Mammary epithelial cell (primary cell): ENCODE measurements at regions of chr20 and their contacts with region 1.

Region 1: GRCh38 chr20:11917663-11918062 is at the start of gene BTBD3:
- DNase-seq: peak; percentile 83
- H3K4me3 ChIP-seq: peak within 1 kb of the TSS; percentile 22 to 33 (median 24)
- H3K27ac ChIP-seq: peak within 1 kb of the TSS; percentile 47
- H3K4me1 ChIP-seq: peaks cover 51% of the 10 kb centered on the region
- H3K27me3 ChIP-seq: no peaks in the 10 kb centered on the region
- CTCF ChIP-seq: peak in 1 of 2 donors; percentile 39
- total RNA-seq, gene BTBD3: 32.2 to 41.0 TPM

Region 2: GRCh38 chr20:11716239-11716944 is 201.3 kb before region 1 on chr20:
- CTCF ChIA-PET with region 1: no interaction called
- dilution Hi-C with region 1: no loop called
- in situ Hi-C with region 1: no loop called
- intact Hi-C with region 1: loop called (anchors 5 kb)
- DNase-seq: peak; percentile 71
- H3K4me3 ChIP-seq: no peak overlapping the region
- H3K27ac ChIP-seq: no peak overlapping the region
- H3K4me1 ChIP-seq: peaks cover 10% of the 10 kb centered on the region
- H3K27me3 ChIP-seq: no peaks in the 10 kb centered on the region
- CTCF ChIP-seq: peak; percentile 45 to 51

Region 3: GRCh38 chr20:11849976-11850670 is 67.5 kb before region 1 on chr20:
- CTCF ChIA-PET with region 1: no interaction called
- dilution Hi-C with region 1: no loop called
- in situ Hi-C with region 1: no loop called
- intact Hi-C with region 1: loop called (anchors 2 kb)
- DNase-seq: peak; percentile 93
- H3K4me3 ChIP-seq: peak overlapping the region in 2 of 3 experiments; percentile 39 to 41
- H3K27ac ChIP-seq: peak overlapping the region; percentile 89
- H3K4me1 ChIP-seq: peaks cover 43% of the 10 kb centered on the region
- H3K27me3 ChIP-seq: no peaks in the 10 kb centered on the region
- CTCF ChIP-seq: no peak

Region 4: GRCh38 chr20:12715991-12716680 is 798.5 kb after region 1 on chr20:
- CTCF ChIA-PET with region 1: no interaction called
- dilution Hi-C with region 1: no loop called
- in situ Hi-C with region 1: no loop called
- intact Hi-C with region 1: no loop called
- DNase-seq: no peak
- H3K4me3 ChIP-seq: no peak overlapping the region
- H3K27ac ChIP-seq: peak overlapping the region; percentile 82
- H3K4me1 ChIP-seq: peaks cover 36% of the 10 kb centered on the region
- H3K27me3 ChIP-seq: no peaks in the 10 kb centered on the region
- CTCF ChIP-seq: no peak